PC-9 (cell line): ENCODE measurements at regions of chr12 and their contacts with region 1.

Region 1: GRCh38 chr12:16359512-16360491 is 12.4 kb downstream of the MGST1 start:
- DNase-seq: peak in 1 of 2 experiments; percentile 53
- H3K4me3 ChIP-seq: no peak overlapping the region
- H3K27ac ChIP-seq: no peak overlapping the region; the same call in 1 of the 2 replicates
- H3K4me1 ChIP-seq: 0 out of 2 replicates have a peak, but pooled peaks cover under 1% of the 10 kb centered on the region
- H3K27me3 ChIP-seq: no peaks in the 10 kb centered on the region
- CTCF ChIP-seq: peak; percentile 95

Region 2: GRCh38 chr12:15910864-15911721 is 448.7 kb before region 1 on chr12 and contains the start of gene DERA:
- CTCF ChIA-PET with region 1: no interaction called
- POLR2A ChIA-PET with region 1: no interaction called
- intact Hi-C with region 1: loop called (anchors 10 kb)
- DNase-seq: peak; percentile 64 to 92
- H3K4me3 ChIP-seq: peak within 1 kb of the TSS; percentile 80
- H3K27ac ChIP-seq: peak within 1 kb of the TSS; percentile 82
- H3K4me1 ChIP-seq: peaks cover 17% of the 10 kb centered on the region
- H3K27me3 ChIP-seq: no peaks in the 10 kb centered on the region
- CTCF ChIP-seq: 0 out of 2 replicates have a peak, but pooled peaks have one; percentile 19
- total RNA-seq, gene DERA: 67.3 and 67.6 TPM in 2 replicates

Region 3: DNA sequence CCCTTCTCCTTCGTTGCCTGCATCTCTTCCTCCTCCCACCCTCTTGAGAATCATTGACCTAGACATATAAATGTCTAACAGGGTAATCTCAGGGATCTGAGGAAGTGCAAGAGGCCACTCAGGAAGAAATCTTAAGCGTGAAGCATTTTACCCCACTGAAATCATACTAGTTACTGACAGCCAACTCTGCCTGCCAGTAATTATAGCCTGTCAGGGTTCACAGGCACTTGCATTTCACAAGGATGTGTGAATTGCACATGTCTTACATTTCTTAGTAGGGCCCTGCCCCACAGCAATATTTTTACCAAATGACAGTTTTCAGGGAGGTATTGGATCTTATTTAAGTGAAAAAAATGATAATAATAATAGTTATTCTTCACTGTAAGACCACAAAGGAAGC is 209.5 kb before region 1 on chr12:
- CTCF ChIA-PET with region 1: no interaction called
- POLR2A ChIA-PET with region 1: no interaction called
- intact Hi-C with region 1: no loop called
- DNase-seq: no peak
- H3K4me3 ChIP-seq: no peak overlapping the region
- H3K27ac ChIP-seq: no peak overlapping the region
- H3K4me1 ChIP-seq: no peaks in the 10 kb centered on the region
- H3K27me3 ChIP-seq: 0 out of 2 replicates have a peak, but pooled peaks cover 10% of the 10 kb centered on the region
- CTCF ChIP-seq: no peak

Region 4: DNA sequence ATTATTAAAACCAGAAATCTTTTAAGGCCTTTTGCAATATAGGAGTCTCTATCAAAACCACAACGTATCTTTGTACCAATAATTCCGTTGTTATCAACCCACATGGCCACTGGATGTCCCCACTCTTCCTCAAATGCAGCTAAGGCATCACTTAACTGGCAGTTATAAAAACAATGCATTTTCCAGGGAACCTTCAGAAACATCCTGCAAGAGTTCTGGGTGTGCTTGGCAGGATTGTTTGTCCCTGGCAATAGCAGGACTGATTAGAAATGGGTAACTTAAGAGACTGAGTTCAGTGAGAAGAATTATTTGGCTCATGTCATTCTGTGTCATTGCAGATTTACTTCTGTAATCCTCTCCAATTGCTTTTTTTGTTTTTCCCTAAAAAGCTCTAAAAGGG is 194.3 kb before region 1 on chr12:
- CTCF ChIA-PET with region 1: no interaction called
- POLR2A ChIA-PET with region 1: no interaction called
- intact Hi-C with region 1: loop called (anchors 1 kb)
- DNase-seq: peak in 1 of 2 experiments; percentile 53
- H3K4me3 ChIP-seq: no peak overlapping the region
- H3K27ac ChIP-seq: no peak overlapping the region
- H3K4me1 ChIP-seq: no peaks in the 10 kb centered on the region
- H3K27me3 ChIP-seq: no peaks in the 10 kb centered on the region
- CTCF ChIP-seq: peak; percentile 80

Region 5: DNA sequence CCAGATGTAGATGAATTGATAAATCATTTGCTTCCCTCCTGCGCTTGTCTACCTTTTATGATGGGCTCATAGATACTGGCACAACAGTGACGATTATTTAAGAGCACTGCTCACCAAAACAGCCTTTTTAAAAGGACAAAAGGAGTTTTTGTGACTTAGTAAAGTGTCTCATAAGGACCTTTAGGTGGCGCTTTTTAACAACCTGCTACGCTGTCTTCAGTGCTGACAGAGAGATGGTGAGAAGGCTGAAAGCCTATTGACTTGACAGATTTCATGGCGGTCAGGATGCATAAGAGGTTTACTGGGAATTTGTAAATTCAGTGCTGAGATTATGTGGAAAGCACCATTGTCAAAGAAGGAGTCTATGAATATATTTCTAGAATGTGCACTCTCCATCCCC is 170.0 kb before region 1 on chr12:
- CTCF ChIA-PET with region 1: no interaction called
- POLR2A ChIA-PET with region 1: no interaction called
- intact Hi-C with region 1: loop called (anchors 1 kb)
- DNase-seq: no peak
- H3K4me3 ChIP-seq: no peak overlapping the region
- H3K27ac ChIP-seq: no peak overlapping the region
- H3K4me1 ChIP-seq: no peaks in the 10 kb centered on the region
- H3K27me3 ChIP-seq: no peaks in the 10 kb centered on the region
- CTCF ChIP-seq: peak; percentile 56

Region 6: GRCh38 chr12:16588812-16589211 is 229.0 kb after region 1 on chr12:
- CTCF ChIA-PET with region 1: no interaction called
- POLR2A ChIA-PET with region 1: no interaction called
- intact Hi-C with region 1: no loop called
- DNase-seq: no peak
- H3K4me3 ChIP-seq: no peak overlapping the region
- H3K27ac ChIP-seq: no peak overlapping the region
- H3K4me1 ChIP-seq: peaks cover 7% of the 10 kb centered on the region
- H3K27me3 ChIP-seq: no peaks in the 10 kb centered on the region
- CTCF ChIP-seq: no peak